IMR-90 (cell line): ENCODE measurements at regions of chr14 and their contacts with region 1.

Region 1: GRCh38 chr14:74618078-74618952 is 6.3 kb upstream of the LTBP2 start:
- DNase-seq: peak; percentile 74
- ATAC-seq: no peak
- H3K4me3 ChIP-seq: no peak overlapping the region
- H3K27ac ChIP-seq: peak overlapping the region; percentile 92
- H3K4me1 ChIP-seq: peaks cover 44% of the 10 kb centered on the region
- H3K27me3 ChIP-seq: no peaks in the 10 kb centered on the region
- CTCF ChIP-seq: no peak
- POLR2A ChIP-seq: 0 out of 2 replicates have a peak, but pooled peaks have one; percentile 21
- RAD21 ChIP-seq: no peak

Region 2: DNA sequence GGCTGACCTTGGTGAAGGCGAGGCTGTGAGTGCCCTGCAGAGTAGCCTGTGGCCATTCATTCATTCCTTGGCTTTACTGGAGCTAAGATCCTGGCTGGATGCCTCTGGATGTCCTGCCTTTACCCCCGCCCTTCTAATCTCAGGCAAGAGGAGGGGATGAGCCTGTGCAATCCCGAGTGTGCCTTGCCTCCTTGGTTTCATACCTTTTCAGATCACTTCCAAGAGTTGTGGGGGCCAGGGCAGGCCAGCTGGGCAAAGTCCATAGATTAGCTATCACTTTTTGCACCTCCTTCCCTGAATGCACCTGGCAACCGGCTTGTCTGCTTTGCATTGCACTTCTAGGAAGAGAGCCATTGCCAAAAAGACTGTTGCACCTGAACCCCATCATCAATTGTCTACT is 268.6 kb before region 1 on chr14:
- CTCF ChIA-PET with region 1: no interaction called
- POLR2A ChIA-PET with region 1: no interaction called
- dilution Hi-C with region 1: no loop called
- in situ Hi-C with region 1: no loop called
- intact Hi-C with region 1: no loop called
- DNase-seq: no peak
- ATAC-seq: no peak
- H3K4me3 ChIP-seq: no peak overlapping the region
- H3K27ac ChIP-seq: no peak overlapping the region
- H3K4me1 ChIP-seq: no peaks in the 10 kb centered on the region
- H3K27me3 ChIP-seq: peaks cover 59% of the 10 kb centered on the region
- CTCF ChIP-seq: no peak
- POLR2A ChIP-seq: no peak
- RAD21 ChIP-seq: no peak

Region 3: GRCh38 chr14:74634964-74635363 is 16.6 kb after region 1 on chr14:
- CTCF ChIA-PET with region 1: no interaction called
- POLR2A ChIA-PET with region 1: no interaction called
- dilution Hi-C with region 1: no loop called
- in situ Hi-C with region 1: no loop called
- intact Hi-C with region 1: loop called (anchors 1 kb)
- DNase-seq: no peak
- ATAC-seq: no peak
- H3K4me3 ChIP-seq: no peak overlapping the region
- H3K27ac ChIP-seq: no peak overlapping the region
- H3K4me1 ChIP-seq: peaks cover 34% of the 10 kb centered on the region
- H3K27me3 ChIP-seq: no peaks in the 10 kb centered on the region
- CTCF ChIP-seq: no peak
- POLR2A ChIP-seq: no peak
- RAD21 ChIP-seq: no peak

Region 4: GRCh38 chr14:74655599-74656389 is 37.5 kb after region 1 on chr14:
- CTCF ChIA-PET with region 1: interaction called, 3 read pairs
- POLR2A ChIA-PET with region 1: interaction called, 3 read pairs
- dilution Hi-C with region 1: no loop called
- in situ Hi-C with region 1: no loop called
- intact Hi-C with region 1: loop called (anchors 5 kb)
- DNase-seq: peak; percentile 61
- ATAC-seq: peak; percentile 77
- H3K4me3 ChIP-seq: no peak overlapping the region
- H3K27ac ChIP-seq: peak overlapping the region; percentile 70
- H3K4me1 ChIP-seq: peaks cover 39% of the 10 kb centered on the region
- H3K27me3 ChIP-seq: no peaks in the 10 kb centered on the region
- CTCF ChIP-seq: no peak
- POLR2A ChIP-seq: no peak
- RAD21 ChIP-seq: no peak; the same call in 1 of the 2 replicates